ENCODE measurements at regions of chr13 and their contacts with region 1.

Region 1: DNA sequence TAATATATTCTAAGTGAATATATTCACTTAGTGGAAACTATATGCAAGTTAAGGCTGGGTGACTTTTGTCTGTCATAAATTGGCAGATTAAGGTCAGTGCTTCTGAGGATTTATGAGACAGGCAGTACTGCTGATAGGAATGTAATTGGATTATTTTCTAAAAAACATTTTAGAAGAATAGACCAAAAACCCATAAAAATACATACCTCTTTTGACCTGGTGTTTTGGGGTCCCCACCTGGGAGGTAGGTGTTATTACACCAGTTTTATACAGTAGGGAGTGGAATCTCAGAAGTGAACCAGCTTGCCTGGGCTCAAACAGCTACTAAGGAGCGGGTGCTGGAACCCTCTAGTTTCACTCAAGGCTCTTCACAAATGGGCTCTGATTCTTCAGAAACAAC is 25.3 kb downstream of the COG3 start:
- DNase-seq: no peak
- H3K4me3 ChIP-seq: no peak overlapping the region
- CTCF ChIP-seq: peak; percentile 14

Region 2: GRCh38 chr13:45575146-45575829 is 85.2 kb after region 1 on chr13:
- in situ Hi-C with region 1: loop called (anchors 5 kb)
- DNase-seq: no peak
- H3K4me3 ChIP-seq: no peak overlapping the region
- CTCF ChIP-seq: no peak